ENCODE measurements at regions of chr1 and their contacts with region 1.

Region 1: GRCh38 chr1:95233737-95234500 is at the start of gene RWDD3:
- DNase-seq: peak; percentile 98
- H3K4me3 Mint-ChIP-seq: peak within 1 kb of the TSS; percentile 94
- H3K27ac Mint-ChIP-seq: peak within 1 kb of the TSS; percentile 93
- H3K4me1 Mint-ChIP-seq: peaks cover 26% of the 10 kb centered on the region
- H3K27me3 Mint-ChIP-seq: peaks cover 28% of the 10 kb centered on the region
- total RNA-seq, gene RWDD3: 11.6 and 12.0 TPM in 2 replicates

Region 2: DNA sequence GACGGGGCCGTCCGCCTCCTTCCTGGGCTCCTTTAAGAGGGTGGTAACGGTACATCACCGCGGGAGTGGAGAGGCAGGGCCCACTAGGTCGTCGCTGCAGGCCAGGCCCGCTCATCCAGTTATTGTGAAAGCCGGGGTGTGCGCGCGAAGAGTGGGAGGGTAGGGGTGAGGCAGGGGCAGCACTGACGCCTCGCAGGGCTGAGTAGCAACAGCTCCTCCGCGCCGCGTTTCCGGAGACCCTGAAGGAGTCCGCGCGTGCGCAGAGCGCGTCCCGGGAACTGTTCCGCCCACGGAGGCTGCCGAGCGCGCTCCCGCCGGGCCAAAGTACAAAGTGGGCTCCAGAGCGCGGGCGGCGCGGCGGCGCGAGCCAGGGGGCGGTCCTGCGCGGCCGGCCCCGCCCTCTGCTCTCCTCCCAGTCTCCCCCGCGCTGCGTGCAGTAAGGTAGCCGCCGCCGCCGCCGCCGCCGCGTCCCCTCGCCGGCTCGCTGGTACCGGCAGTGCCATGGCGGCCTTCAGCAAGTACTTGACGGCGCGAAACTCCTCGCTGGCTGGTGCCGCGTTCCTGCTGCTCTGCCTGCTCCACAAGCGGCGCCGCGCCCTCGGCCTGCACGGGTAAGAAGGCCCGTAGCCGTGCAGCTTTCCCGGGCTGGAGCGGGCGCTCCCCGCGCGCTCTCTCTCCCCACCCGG is 815.8 kb before region 1 on chr1 and contains the start of gene ABCD3:
- intact Hi-C with region 1: loop called (anchors 10 kb)
- DNase-seq: peak; percentile 99
- H3K4me3 Mint-ChIP-seq: no peak within 1 kb of the TSS
- H3K27ac Mint-ChIP-seq: peak within 1 kb of the TSS; percentile 81
- H3K4me1 Mint-ChIP-seq: peaks cover 18% of the 10 kb centered on the region
- H3K27me3 Mint-ChIP-seq: peaks cover 15% of the 10 kb centered on the region
- total RNA-seq, gene ABCD3: 29.9 and 31.1 TPM in 2 replicates

Region 3: DNA sequence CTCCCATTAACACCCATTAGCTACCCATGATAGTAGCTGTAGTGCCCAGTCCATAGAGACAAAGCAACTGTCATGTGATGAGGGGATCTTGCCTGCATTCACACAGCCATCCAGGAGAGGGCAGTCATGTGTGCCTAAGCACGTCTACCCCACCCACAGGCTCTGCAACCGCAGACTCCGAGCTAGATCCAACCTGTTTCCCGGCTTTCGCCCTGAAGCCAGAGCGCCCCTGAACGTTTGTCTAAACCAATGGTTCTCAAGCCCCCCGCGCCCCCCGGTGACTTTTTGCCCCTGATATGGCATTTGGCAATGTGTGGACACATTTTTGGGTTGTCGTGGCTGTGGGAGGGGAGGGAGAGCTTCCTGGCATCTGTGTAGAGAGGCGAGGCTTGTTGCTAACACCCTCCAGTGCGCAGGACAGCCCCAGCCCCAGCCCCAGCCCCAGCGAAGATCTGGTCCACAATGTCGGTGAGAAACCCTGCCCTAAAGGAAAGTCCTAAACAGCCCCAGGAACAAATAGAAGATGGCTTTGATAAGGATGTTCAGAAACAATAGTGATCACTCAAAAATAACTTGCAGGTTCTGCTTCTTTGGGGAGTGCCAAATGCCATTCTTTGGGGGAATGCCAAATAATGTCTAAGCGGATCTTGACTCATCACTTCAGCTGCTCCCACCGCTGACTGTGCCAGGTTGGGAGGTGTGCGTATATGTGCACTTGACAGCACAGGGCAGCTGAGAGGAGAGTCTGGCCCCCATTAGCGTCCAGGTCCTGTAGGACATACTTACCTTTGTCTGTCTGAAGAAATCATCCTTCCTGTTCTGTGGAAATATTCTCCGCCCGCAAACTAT is 379.2 kb before region 1 on chr1:
- intact Hi-C with region 1: loop called (anchors 1 kb)
- DNase-seq: peak; percentile 93
- H3K4me3 Mint-ChIP-seq: no peak overlapping the region
- H3K27ac Mint-ChIP-seq: no peak overlapping the region
- H3K4me1 Mint-ChIP-seq: no peaks in the 10 kb centered on the region
- H3K27me3 Mint-ChIP-seq: peaks cover 5% of the 10 kb centered on the region

Region 4: DNA sequence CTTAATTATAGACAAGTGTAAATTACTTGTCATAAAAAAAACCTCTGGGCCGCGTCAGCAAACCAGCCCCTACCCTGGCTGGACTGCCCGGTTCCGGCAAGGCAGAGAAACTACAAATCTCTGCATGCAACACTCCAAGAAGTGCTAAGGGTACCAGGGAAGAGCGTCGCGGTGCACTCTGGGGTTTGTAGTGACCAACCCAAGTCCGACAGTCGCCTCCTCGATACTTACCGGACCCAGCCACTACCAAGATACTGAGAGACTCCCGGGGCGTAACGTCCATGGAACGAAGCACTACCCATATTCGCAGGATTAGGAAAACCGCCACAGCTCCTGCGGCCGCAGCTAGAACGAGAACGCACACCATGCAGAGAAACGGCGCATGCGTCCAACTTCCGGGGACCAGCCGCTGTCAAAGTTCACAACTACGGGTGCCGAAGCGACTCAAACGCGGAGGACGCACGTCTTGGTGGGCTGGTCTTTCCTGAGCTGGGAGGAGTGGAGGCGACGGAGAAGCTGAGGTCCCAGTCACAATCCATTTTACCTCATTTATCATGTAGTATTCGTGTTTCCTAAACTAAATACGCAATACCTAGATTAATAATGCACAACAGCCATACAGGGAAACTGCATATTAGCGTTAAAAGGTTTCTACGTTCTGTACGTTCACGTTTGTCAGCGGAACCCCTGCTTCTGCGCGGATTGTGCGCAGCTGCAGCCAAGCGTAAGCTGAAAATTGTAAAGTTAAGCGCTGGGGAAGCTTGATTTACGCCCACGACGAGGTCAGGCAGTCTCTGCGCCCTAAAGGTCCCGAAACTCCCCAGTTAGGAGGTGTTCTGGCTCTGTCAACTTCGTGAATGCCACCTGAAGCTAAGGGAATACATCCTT is 161.1 kb before region 1 on chr1 and contains the start of gene ALG14:
- intact Hi-C with region 1: loop called (anchors 1 kb)
- DNase-seq: peak; percentile 97
- H3K4me3 Mint-ChIP-seq: peak within 1 kb of the TSS; percentile 91
- H3K27ac Mint-ChIP-seq: peak within 1 kb of the TSS; percentile 94
- H3K4me1 Mint-ChIP-seq: peaks cover 19% of the 10 kb centered on the region
- H3K27me3 Mint-ChIP-seq: no peaks in the 10 kb centered on the region
- total RNA-seq, gene ALG14: 1.7 and 2.1 TPM in 2 replicates

Region 5: DNA sequence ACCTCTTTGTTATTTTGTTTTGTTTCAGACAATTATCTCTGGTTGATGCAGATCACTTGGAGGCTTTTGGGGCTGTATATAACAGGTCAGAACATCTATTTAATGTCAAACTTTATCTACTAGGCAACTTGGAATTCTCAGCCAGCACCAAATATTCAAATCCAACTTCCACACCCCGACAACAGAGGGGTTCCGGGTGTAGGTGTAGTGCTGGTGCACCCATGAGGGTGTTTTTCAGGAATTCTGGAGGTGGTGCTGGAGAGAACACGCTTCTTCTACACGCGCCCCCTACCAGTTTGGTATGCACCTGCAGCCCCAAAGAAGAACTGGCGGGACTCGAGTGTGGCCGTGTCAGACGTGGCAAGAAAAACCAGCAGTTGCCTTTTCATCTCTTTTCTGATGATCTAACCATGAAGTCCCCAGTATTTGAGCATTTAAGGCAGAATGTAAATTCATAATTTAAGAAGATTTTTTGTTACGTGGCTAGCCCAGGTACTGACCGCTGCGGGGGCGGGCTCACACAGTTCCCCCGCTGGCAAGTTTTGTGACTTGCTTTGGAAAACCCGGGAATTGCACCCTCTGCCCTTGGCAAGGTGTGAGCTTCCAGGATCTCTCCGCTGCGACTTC is 117.2 kb before region 1 on chr1:
- intact Hi-C with region 1: loop called (anchors 2 kb)
- DNase-seq: peak; percentile 77
- H3K4me3 Mint-ChIP-seq: peak overlapping the region; percentile 81
- H3K27ac Mint-ChIP-seq: no peak overlapping the region
- H3K4me1 Mint-ChIP-seq: peaks cover 7% of the 10 kb centered on the region
- H3K27me3 Mint-ChIP-seq: peaks cover 58% of the 10 kb centered on the region

Region 6: DNA sequence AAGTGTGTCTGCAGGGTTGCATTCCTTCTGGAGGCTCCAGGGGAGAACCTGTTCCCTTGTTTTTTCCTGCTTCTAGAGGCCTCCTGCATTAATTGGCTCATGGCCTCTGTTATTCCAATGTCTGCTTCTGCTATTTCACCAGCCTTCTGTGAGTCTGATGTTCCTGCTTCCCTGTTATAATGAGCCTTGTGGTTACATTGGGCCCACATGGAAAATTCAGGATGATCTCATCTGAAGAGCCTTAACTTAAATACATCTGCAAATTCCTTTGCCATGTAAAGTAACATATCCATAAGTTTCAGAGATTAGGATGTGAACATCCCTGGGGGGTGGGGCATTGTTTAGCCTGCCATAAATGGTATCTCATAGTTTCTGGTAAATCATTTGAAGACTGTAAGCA is 181.2 kb after region 1 on chr1:
- intact Hi-C with region 1: no loop called
- DNase-seq: no peak
- H3K4me3 Mint-ChIP-seq: no peak overlapping the region
- H3K27ac Mint-ChIP-seq: no peak overlapping the region
- H3K4me1 Mint-ChIP-seq: no peaks in the 10 kb centered on the region
- H3K27me3 Mint-ChIP-seq: no peaks in the 10 kb centered on the region